Naive thymus-derived CD4-positive, alpha-beta T cell (primary cell): ENCODE measurements at regions of chr6 and their contacts with region 1.

Region 1: GRCh38 chr6:150004783-150005717 is 20.3 kb downstream of the RAET1L start:
- DNase-seq: peak; percentile 73 to 91 (median 82)
- ATAC-seq: peak; percentile 89
- H3K4me3 ChIP-seq: peak overlapping the region; percentile 87
- H3K4me3 Mint-ChIP-seq: peak overlapping the region; percentile 78 to 96 (median 91)
- H3K27ac ChIP-seq: peak overlapping the region; percentile 75
- H3K27ac Mint-ChIP-seq: peak overlapping the region; percentile 31 to 95 (median 85)
- H3K4me1 ChIP-seq: peaks cover 13 to 31% of the 10 kb centered on the region in 2 donors
- H3K4me1 Mint-ChIP-seq: peaks cover 7 to 56% (median 20%) of the 10 kb centered on the region in 7 donors
- H3K27me3 ChIP-seq: peaks cover 0 to 3% of the 10 kb centered on the region in 2 donors
- H3K27me3 Mint-ChIP-seq: peaks cover 15 to 35% (median 19%) of the 10 kb centered on the region in 5 donors

Region 2: GRCh38 chr6:148720406-148720805 is 1284.6 kb before region 1 on chr6:
- CTCF ChIA-PET with region 1: no interaction called
- POLR2A ChIA-PET with region 1: no interaction called
- intact Hi-C with region 1: no loop called
- DNase-seq: no peak
- ATAC-seq: no peak
- H3K4me3 ChIP-seq: no peak overlapping the region
- H3K4me3 Mint-ChIP-seq: no peak overlapping the region
- H3K27ac ChIP-seq: no peak overlapping the region
- H3K27ac Mint-ChIP-seq: no peak overlapping the region
- H3K4me1 ChIP-seq: no peaks in the 10 kb centered on the region
- H3K4me1 Mint-ChIP-seq: no peaks in the 10 kb centered on the region
- H3K27me3 ChIP-seq: no peaks in the 10 kb centered on the region
- H3K27me3 Mint-ChIP-seq: peaks cover 18 to 38% (median 32%) of the 10 kb centered on the region in 5 donors

Region 3: GRCh38 chr6:149717588-149718458 is 287.2 kb before region 1 on chr6 and contains the start of gene LATS1:
- CTCF ChIA-PET with region 1: no interaction called
- POLR2A ChIA-PET with region 1: no interaction called
- intact Hi-C with region 1: loop called in 1 of 2 experiments (anchors 10 kb)
- DNase-seq: peak; percentile 76 to 96 (median 91)
- ATAC-seq: peak; percentile 96
- H3K4me3 ChIP-seq: peak within 1 kb of the TSS; percentile 72
- H3K4me3 Mint-ChIP-seq: peak within 1 kb of the TSS; percentile 89 to 99 (median 94)
- H3K27ac ChIP-seq: peak within 1 kb of the TSS; percentile 97
- H3K27ac Mint-ChIP-seq: peak within 1 kb of the TSS; percentile 95 to 99 (median 97)
- H3K4me1 ChIP-seq: peaks cover 11 to 19% of the 10 kb centered on the region in 2 donors
- H3K4me1 Mint-ChIP-seq: peaks cover 18 to 51% (median 44%) of the 10 kb centered on the region in 7 donors
- H3K27me3 ChIP-seq: no peaks in the 10 kb centered on the region
- H3K27me3 Mint-ChIP-seq: no peaks in the 10 kb centered on the region
- total RNA-seq, gene LATS1: 33.3 to 49.5 (median 44.6) TPM

Region 4: GRCh38 chr6:149941583-149942431 is 63.2 kb before region 1 on chr6 and contains the start of gene ULBP2:
- CTCF ChIA-PET with region 1: no interaction called
- POLR2A ChIA-PET with region 1: no interaction called
- intact Hi-C with region 1: loop called (anchors 1 kb)
- DNase-seq: peak; percentile 69 to 94 (median 80)
- ATAC-seq: peak; percentile 94
- H3K4me3 ChIP-seq: peak within 1 kb of the TSS; percentile 58
- H3K4me3 Mint-ChIP-seq: peak within 1 kb of the TSS; percentile 78 to 96 (median 94)
- H3K27ac ChIP-seq: peak within 1 kb of the TSS; percentile 9
- H3K27ac Mint-ChIP-seq: peak within 1 kb of the TSS; percentile 74 to 91 (median 85)
- H3K4me1 ChIP-seq: peaks cover 14 to 20% of the 10 kb centered on the region in 2 donors
- H3K4me1 Mint-ChIP-seq: peaks cover 13 to 40% (median 31%) of the 10 kb centered on the region in 7 donors
- H3K27me3 ChIP-seq: peaks cover 25 to 35% of the 10 kb centered on the region in 2 donors
- H3K27me3 Mint-ChIP-seq: peaks cover 31 to 82% (median 44%) of the 10 kb centered on the region in 5 donors
- total RNA-seq, gene ULBP2: 0.27 to 1.0 (median 0.65) TPM in 4 of 5 experiments, not detected in the other

Region 5: GRCh38 chr6:149990618-149991471 is 14.2 kb before region 1 on chr6:
- CTCF ChIA-PET with region 1: no interaction called
- POLR2A ChIA-PET with region 1: interaction called, 4 read pairs
- intact Hi-C with region 1: loop called (anchors 1 kb)
- DNase-seq: peak in 2 of 9 donors; percentile 23 to 27
- ATAC-seq: peak; percentile 58
- H3K4me3 ChIP-seq: peak overlapping the region; percentile 53
- H3K4me3 Mint-ChIP-seq: peak overlapping the region; percentile 66 to 95 (median 82)
- H3K27ac ChIP-seq: no peak overlapping the region
- H3K27ac Mint-ChIP-seq: peak overlapping the region in 1 of 9 donors; percentile 10
- H3K4me1 ChIP-seq: peaks cover 24 to 26% of the 10 kb centered on the region in 2 donors
- H3K4me1 Mint-ChIP-seq: peaks cover 25 to 38% (median 30%) of the 10 kb centered on the region in 7 donors
- H3K27me3 ChIP-seq: peaks cover 15 to 40% of the 10 kb centered on the region in 2 donors
- H3K27me3 Mint-ChIP-seq: peaks cover 90 to 97% (median 96%) of the 10 kb centered on the region in 5 donors

Region 6: GRCh38 chr6:150046943-150047342 is 41.9 kb after region 1 on chr6:
- CTCF ChIA-PET with region 1: no interaction called
- POLR2A ChIA-PET with region 1: no interaction called
- intact Hi-C with region 1: no loop called
- DNase-seq: no peak
- ATAC-seq: no peak
- H3K4me3 ChIP-seq: no peak overlapping the region
- H3K4me3 Mint-ChIP-seq: no peak overlapping the region
- H3K27ac ChIP-seq: no peak overlapping the region
- H3K27ac Mint-ChIP-seq: no peak overlapping the region
- H3K4me1 ChIP-seq: no peaks in the 10 kb centered on the region
- H3K4me1 Mint-ChIP-seq: peaks cover 0 to 6% (median 3%) of the 10 kb centered on the region in 7 donors
- H3K27me3 ChIP-seq: peaks cover 3% of the 10 kb centered on the region in 2 donors
- H3K27me3 Mint-ChIP-seq: peaks cover 34 to 56% (median 40%) of the 10 kb centered on the region in 5 donors

Region 7: DNA sequence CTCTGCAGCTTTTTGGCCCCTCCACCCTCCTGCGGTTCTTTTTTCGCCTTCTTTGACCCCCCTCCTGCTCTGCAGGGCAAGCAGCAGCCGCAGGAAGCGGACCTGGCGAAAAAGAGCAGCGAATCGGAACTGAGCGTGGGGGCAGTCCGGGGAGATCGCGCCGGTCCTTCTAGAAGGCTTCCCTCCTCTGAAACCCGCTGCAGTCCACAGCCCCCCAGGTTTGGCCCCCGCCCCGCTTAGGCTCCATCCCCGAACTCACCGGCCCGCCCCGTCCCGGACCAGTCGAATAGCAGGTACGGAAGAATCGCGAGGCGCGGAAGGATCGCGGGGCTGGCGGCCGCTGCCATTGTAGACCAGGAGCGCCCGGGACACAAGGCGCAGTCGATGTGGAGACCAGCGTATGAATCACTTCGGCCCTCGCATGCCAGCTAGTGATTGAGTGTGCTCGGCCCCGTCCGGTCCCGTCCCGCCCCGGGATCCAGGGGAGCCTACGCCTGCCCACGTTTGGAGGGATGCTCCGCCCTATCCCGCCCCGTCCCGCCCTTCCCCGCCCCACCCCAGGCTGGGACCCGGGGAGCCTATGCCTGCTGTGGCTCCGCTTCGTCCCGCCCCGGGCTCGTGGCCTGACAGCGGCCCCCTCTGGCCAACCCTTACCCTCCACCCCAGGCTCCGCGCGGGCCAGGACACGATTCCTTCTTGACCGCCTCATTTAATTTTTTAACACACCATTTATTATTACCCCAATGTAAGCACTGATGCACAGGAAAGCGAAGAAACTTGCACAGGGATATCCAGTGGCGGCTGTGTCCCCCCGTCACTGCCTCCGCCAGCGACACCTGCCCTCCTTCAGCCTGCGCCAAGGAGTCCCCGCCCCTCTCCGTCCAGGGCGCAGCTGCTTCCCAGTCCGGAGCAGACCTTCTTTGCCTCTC is 63.9 kb after region 1 on chr6 and contains the start of gene ULBP3:
- CTCF ChIA-PET with region 1: no interaction called
- POLR2A ChIA-PET with region 1: no interaction called
- intact Hi-C with region 1: loop called (anchors 1 to 2 kb)
- DNase-seq: peak; percentile 24 to 75 (median 35)
- ATAC-seq: peak; percentile 83
- H3K4me3 ChIP-seq: peak within 1 kb of the TSS; percentile 77
- H3K4me3 Mint-ChIP-seq: peak within 1 kb of the TSS; percentile 80 to 95 (median 90)
- H3K27ac ChIP-seq: no peak within 1 kb of the TSS
- H3K27ac Mint-ChIP-seq: peak within 1 kb of the TSS in 4 of 9 donors; percentile 49 to 82 (median 72)
- H3K4me1 ChIP-seq: peaks cover 0 to 5% of the 10 kb centered on the region in 2 donors
- H3K4me1 Mint-ChIP-seq: peaks cover 10 to 22% (median 14%) of the 10 kb centered on the region in 7 donors
- H3K27me3 ChIP-seq: no peaks in the 10 kb centered on the region
- H3K27me3 Mint-ChIP-seq: peaks cover 4 to 35% (median 12%) of the 10 kb centered on the region in 5 donors
- total RNA-seq, gene ULBP3: 0.42 to 1.5 TPM in 2 of 5 experiments, not detected in the others